ENCODE measurements at regions of chr15 and their contacts with region 1.

Region 1: GRCh38 chr15:32781781-32782180 is 64.0 kb downstream of the GREM1 start:
- DNase-seq: no peak
- H3K4me3 ChIP-seq: no peak overlapping the region
- H3K4me3 Mint-ChIP-seq: no peak overlapping the region
- H3K27ac Mint-ChIP-seq: no peak overlapping the region
- H3K4me1 ChIP-seq: peaks cover under 1% of the 10 kb centered on the region; the same call in 1 of the 2 replicates
- H3K4me1 Mint-ChIP-seq: no peaks in the 10 kb centered on the region
- H3K27me3 ChIP-seq: no peaks in the 10 kb centered on the region
- H3K27me3 Mint-ChIP-seq: no peaks in the 10 kb centered on the region
- CTCF ChIP-seq: no peak

Region 2: DNA sequence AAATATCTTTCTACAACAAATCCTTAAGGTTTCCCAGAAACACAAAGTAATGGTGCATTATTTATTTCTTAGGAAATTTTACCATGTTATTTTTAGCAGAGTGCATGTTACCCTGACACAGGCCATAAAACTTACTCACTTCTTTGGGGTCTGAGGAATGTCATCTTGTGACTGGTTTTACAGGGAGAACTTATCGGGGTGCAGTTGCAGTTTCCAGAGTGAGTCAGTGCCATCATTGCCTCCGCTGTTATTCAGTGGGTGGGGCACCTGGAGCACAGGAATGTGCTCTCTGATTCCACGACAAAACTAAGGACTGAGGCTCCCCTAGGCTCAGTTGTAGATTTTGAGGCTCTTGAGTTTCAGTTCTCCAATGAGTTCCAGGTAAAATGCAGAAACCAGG is 75.1 kb before region 1 on chr15:
- CTCF ChIA-PET with region 1: no interaction called
- POLR2A ChIA-PET with region 1: no interaction called
- intact Hi-C with region 1: loop called (anchors 10 kb)
- DNase-seq: peak in 1 of 2 experiments; percentile 53
- H3K4me3 ChIP-seq: no peak overlapping the region
- H3K4me3 Mint-ChIP-seq: no peak overlapping the region
- H3K27ac Mint-ChIP-seq: peak overlapping the region; percentile 52
- H3K4me1 ChIP-seq: peaks cover 22% of the 10 kb centered on the region
- H3K4me1 Mint-ChIP-seq: peaks cover 16% of the 10 kb centered on the region
- H3K27me3 ChIP-seq: no peaks in the 10 kb centered on the region
- H3K27me3 Mint-ChIP-seq: no peaks in the 10 kb centered on the region
- CTCF ChIP-seq: no peak

Region 3: DNA sequence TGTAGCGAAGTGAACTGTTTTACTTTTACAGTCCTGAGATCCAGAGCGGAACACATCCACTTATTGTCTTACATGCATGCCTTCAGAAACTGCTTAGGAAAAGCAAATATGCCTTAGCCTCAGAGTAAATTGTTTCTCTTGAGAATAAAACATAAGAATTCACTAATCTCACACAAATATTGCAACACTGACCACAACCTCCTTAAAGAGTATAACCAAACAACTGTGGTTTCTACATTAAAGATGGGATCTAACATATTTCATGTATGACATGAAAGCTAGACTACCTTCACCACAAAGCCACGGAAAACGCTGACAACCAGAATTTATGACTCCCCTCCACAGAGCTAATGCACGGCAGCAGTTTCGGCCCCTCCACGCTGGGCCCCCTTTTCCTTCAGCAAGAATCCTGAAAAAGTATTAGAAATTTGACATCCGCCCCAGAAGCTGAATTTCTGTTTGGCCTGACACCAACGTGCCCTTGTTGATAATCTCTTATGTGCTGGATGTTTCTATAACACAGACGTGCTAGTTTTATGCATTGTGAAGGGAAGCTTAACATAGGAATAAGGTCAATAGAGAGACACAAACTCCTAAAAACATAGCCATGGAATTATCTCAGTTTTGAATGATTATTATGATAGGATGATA is 20.6 kb after region 1 on chr15:
- CTCF ChIA-PET with region 1: no interaction called
- POLR2A ChIA-PET with region 1: no interaction called
- intact Hi-C with region 1: no loop called
- DNase-seq: no peak
- H3K4me3 ChIP-seq: no peak overlapping the region
- H3K4me3 Mint-ChIP-seq: no peak overlapping the region
- H3K27ac Mint-ChIP-seq: no peak overlapping the region
- H3K4me1 ChIP-seq: no peaks in the 10 kb centered on the region
- H3K4me1 Mint-ChIP-seq: no peaks in the 10 kb centered on the region
- H3K27me3 ChIP-seq: no peaks in the 10 kb centered on the region
- H3K27me3 Mint-ChIP-seq: no peaks in the 10 kb centered on the region
- CTCF ChIP-seq: no peak

Region 4: GRCh38 chr15:32838820-32839219 is 57.0 kb after region 1 on chr15:
- CTCF ChIA-PET with region 1: no interaction called
- POLR2A ChIA-PET with region 1: no interaction called
- intact Hi-C with region 1: no loop called
- DNase-seq: no peak
- H3K4me3 ChIP-seq: no peak overlapping the region
- H3K4me3 Mint-ChIP-seq: no peak overlapping the region
- H3K27ac Mint-ChIP-seq: no peak overlapping the region
- H3K4me1 ChIP-seq: no peaks in the 10 kb centered on the region
- H3K4me1 Mint-ChIP-seq: no peaks in the 10 kb centered on the region
- H3K27me3 ChIP-seq: no peaks in the 10 kb centered on the region
- H3K27me3 Mint-ChIP-seq: peaks cover 16% of the 10 kb centered on the region
- CTCF ChIP-seq: no peak